Naive thymus-derived CD4-positive, alpha-beta T cell (primary cell): ENCODE measurements at regions of chrX and their contacts with region 1.

Region 1: DNA sequence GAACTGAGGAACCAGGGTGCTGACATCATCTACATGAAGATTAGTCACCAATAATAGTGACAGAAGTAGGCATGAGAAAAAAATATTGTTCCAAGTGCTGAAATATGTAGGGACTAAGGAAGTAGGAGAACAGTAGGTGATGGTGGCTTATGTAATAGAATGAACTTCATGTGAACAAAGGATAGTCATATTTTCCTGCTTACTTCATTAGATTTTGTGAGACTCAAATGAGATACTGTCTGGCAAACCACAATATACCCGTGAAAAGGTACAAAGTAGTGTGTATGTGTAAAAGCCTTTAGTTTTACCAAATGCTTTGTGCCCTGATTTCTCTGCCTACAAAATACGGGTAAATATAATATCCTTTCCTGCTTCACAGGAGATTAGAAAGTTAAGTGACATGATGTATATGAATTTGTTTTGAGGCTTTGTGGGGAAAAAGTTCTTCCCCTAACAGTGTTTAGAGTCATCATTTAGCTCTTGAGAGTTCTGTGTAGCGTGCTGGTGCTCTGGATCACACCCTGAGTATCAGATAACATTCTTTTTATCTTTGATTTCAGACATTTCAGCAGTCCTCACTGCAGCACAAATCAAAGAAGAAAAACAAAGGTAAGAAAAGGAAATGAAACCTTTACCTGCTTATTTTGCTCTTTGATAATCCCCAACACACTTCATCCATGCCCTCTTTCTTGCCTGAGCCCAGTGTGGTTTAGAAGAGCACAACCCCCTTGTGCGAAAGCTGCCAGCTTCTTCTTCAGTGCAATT is 67.9 kb downstream of the KLHL34 start:
- DNase-seq: peak in 7 of 9 donors; percentile 8 to 64 (median 42)
- ATAC-seq: peak; percentile 87
- H3K4me3 ChIP-seq: no peak overlapping the region
- H3K4me3 Mint-ChIP-seq: peak overlapping the region in 9 of 10 donors; percentile 30 to 75 (median 53)
- H3K27ac ChIP-seq: peak overlapping the region; percentile 10
- H3K27ac Mint-ChIP-seq: peak overlapping the region in 8 of 9 donors; percentile 32 to 94 (median 88)
- H3K4me1 ChIP-seq: peaks cover 0 to 12% of the 10 kb centered on the region in 2 donors
- H3K4me1 Mint-ChIP-seq: peaks cover 5 to 31% (median 18%) of the 10 kb centered on the region in 7 donors
- H3K27me3 ChIP-seq: no peaks in the 10 kb centered on the region
- H3K27me3 Mint-ChIP-seq: no peaks in the 10 kb centered on the region

Region 2: GRCh38 chrX:21509912-21510311 is 80.3 kb before region 1 on chrX:
- CTCF ChIA-PET with region 1: no interaction called
- POLR2A ChIA-PET with region 1: no interaction called
- intact Hi-C with region 1: loop called in 1 of 2 experiments (anchors 5 kb)
- DNase-seq: no peak
- ATAC-seq: no peak
- H3K4me3 ChIP-seq: no peak overlapping the region
- H3K4me3 Mint-ChIP-seq: no peak overlapping the region
- H3K27ac ChIP-seq: no peak overlapping the region
- H3K27ac Mint-ChIP-seq: no peak overlapping the region
- H3K4me1 ChIP-seq: no peaks in the 10 kb centered on the region
- H3K4me1 Mint-ChIP-seq: no peaks in the 10 kb centered on the region
- H3K27me3 ChIP-seq: no peaks in the 10 kb centered on the region
- H3K27me3 Mint-ChIP-seq: no peaks in the 10 kb centered on the region

Region 3: DNA sequence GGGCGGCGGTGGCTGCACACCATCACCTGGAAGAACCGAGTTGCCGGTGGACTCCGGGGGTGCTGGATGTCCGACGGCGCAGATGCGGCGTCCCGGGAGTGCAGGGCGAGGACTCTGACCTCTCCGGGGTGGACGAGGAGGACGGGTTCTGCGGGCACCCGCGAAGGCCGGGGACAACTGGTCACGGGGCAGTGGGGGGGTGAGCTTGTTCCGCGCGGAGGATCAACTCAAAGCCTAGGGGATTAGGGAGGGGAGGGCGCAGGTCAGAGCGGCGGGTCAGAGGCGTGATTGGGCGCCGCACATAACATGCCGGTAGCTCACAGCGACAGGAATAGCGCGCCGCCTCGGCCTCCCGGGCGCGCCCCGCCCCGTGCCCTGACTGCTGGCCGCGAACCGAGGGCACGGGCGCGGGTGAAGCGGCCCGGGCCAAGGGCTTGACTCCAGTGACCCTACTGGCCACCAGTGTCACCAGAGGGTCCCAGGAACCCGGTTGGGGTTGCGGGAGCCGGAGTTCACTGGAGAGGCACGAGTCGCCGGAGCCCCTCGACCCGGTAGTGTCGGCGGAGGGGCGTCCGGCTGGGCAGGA is 68.1 kb after region 1 on chrX and contains the start of gene KLHL34:
- CTCF ChIA-PET with region 1: no interaction called
- POLR2A ChIA-PET with region 1: no interaction called
- intact Hi-C with region 1: loop called in 1 of 2 experiments (anchors 2 kb)
- DNase-seq: peak in 6 of 9 donors; percentile 17 to 24 (median 20)
- ATAC-seq: peak; percentile 56
- H3K4me3 ChIP-seq: peak within 1 kb of the TSS; percentile 43
- H3K4me3 Mint-ChIP-seq: peak within 1 kb of the TSS; percentile 65 to 88 (median 80)
- H3K27ac ChIP-seq: peak within 1 kb of the TSS; percentile 59
- H3K27ac Mint-ChIP-seq: peak within 1 kb of the TSS in 8 of 9 donors; percentile 70 to 89 (median 84)
- H3K4me1 ChIP-seq: no peaks in the 10 kb centered on the region
- H3K4me1 Mint-ChIP-seq: peaks cover 0 to 28% (median 4%) of the 10 kb centered on the region in 7 donors
- H3K27me3 ChIP-seq: no peaks in the 10 kb centered on the region
- H3K27me3 Mint-ChIP-seq: peaks cover 0 to 17% (median 4%) of the 10 kb centered on the region in 5 donors
- total RNA-seq, gene KLHL34: 0.41 to 5.3 (median 1.1) TPM